ENCODE measurements at regions of chr5 and their contacts with region 1.

Region 1: GRCh38 chr5:96614110-96614691 is 48.0 kb upstream of the CAST start:
- DNase-seq: peak in 5 of 10 donors; percentile 11 to 66 (median 36)

Region 2: GRCh38 chr5:96572864-96573512 is 41.2 kb before region 1 on chr5:
- intact Hi-C with region 1: no loop called
- DNase-seq: no peak

Region 3: DNA sequence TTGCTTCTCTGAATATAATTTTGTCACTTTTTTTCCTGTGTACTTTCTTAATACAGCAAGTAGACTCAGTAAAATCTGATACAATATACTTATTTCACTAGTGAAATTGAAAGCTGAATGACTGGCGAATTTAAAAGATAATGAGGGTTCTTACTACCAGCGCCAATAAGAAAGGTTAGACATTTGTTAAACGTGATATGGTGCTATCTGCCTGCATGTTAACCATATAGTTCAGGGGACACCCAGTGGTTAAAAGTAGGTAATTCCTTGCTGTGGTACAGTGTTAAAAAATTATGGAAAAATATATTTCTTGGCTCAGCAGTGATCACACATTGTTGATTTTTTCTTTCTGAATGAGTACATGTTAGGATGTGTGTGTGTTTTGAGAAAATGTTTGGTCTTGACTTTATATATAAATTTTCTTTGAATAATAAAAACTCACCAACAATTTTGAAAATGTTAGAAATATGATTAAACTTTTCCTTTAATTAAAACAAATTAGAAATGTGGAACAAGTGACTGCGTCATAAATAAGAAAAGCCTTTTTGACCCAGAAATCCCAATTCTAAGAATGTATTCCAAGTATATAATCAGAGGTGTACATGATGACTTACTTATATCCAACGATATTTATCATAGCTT is 73.7 kb after region 1 on chr5:
- intact Hi-C with region 1: loop called (anchors 5 kb)
- DNase-seq: no peak

Region 4: DNA sequence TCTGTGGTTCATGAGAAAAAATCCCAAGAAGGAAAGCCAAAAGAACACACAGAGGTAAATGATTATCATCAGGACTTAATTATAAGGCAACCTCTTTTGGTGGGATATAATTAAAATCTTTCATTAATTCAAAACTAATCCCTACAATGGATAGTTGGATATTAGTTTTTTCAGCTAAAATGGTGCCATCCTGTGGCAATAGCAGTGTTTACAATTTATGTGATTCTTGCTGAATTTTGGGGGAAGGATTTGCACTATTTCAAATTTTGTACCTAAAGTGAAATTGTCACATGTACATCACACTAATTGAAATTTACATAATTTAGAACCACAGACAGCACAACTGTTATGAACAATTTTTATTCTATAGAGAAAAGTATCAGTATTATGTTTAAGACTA is 115.0 kb after region 1 on chr5:
- intact Hi-C with region 1: loop called (anchors 1 kb)
- DNase-seq: no peak

Measured in posterior cingulate gyrus (tissue), 11 donors.